T-cell (primary cell): ENCODE measurements at regions of chrX and their contacts with region 1.

Region 1: DNA sequence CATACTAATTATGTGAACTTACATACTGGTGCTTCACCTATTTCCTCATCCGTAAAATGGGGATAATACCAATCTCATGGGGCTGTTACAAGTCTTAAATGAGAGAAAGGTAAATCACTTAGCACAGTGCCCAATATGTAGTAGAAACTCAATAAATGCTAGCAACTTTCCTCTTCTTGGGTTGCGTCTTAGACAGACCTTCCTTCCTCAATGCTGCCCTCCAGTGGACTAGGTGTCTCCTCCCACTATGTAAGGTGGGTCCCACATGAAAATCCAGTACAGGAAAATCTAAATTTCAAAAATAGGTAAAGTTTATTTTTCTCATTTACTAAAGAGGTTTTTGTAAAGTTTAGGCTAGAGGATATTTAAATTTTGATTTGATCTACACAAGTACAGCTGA is 20.6 kb downstream of the ZDHHC9 start:
- DNase-seq: peak in 30 of 35 experiments; percentile 22 to 78 (median 48)
- ATAC-seq: peak; percentile 67 to 83 (median 80)
- H3K4me3 ChIP-seq: no peak overlapping the region
- H3K4me3 Mint-ChIP-seq: no peak overlapping the region
- H3K27ac ChIP-seq: no peak overlapping the region
- H3K27ac Mint-ChIP-seq: no peak overlapping the region
- H3K4me1 ChIP-seq: no peaks in the 10 kb centered on the region
- H3K4me1 Mint-ChIP-seq: peaks cover 13 to 17% (median 16%) of the 10 kb centered on the region in 3 donors
- H3K27me3 ChIP-seq: no peaks in the 10 kb centered on the region
- H3K27me3 Mint-ChIP-seq: no peaks in the 10 kb centered on the region

Region 2: DNA sequence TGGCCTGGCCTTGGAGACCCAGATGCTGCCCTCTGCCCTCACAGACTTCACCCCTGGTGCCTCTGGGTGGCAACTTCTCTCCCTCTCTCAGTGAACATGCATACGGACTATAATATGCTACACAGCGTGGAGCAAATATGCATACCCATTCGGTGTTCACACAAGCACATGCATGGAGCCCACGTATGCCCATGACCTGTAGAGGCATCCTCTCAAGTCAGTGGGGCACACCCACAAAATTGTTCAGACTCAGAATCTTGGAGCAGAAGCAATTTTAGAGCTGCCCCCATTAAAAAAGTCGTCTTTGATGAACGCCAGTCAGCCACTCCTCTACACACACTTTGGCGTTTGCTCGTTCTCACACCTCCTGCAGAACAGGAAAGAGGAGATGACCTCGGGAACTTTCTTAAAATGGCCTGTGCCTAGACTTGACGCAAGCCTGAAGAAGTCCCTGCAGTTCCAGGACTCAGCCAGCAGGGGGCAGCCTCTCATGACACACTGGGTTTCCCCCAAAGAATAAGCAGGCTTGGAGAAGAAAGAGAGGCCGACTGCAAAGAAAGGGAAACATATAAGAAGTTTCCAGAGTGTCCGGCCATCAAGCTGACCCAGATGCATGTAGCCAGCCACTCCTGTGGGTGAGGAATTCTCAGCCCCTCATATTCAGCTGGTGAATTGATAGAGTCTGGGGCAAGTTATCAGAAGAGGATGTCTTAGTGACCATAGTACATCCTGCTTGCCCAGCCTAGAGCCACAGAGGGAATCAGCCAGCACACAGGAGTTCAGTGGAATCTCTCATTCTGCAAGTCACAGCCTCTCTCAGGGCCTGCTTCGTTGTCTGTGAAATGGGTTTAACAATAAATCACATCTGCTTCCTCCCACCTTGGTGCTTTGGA is 185.7 kb before region 1 on chrX:
- CTCF ChIA-PET with region 1: interaction called, 6 to 10 read pairs
- POLR2A ChIA-PET with region 1: no interaction called
- DNase-seq: peak; percentile 30 to 80 (median 64)
- ATAC-seq: peak; percentile 68 to 75 (median 74)
- H3K4me3 ChIP-seq: no peak overlapping the region
- H3K4me3 Mint-ChIP-seq: no peak overlapping the region
- H3K27ac ChIP-seq: no peak overlapping the region
- H3K27ac Mint-ChIP-seq: no peak overlapping the region
- H3K4me1 ChIP-seq: peaks cover 0 to 6% of the 10 kb centered on the region in 2 experiments
- H3K4me1 Mint-ChIP-seq: peaks cover 4 to 11% (median 4%) of the 10 kb centered on the region in 3 donors
- H3K27me3 ChIP-seq: no peaks in the 10 kb centered on the region
- H3K27me3 Mint-ChIP-seq: peaks cover 3 to 13% of the 10 kb centered on the region in 2 donors

Region 3: DNA sequence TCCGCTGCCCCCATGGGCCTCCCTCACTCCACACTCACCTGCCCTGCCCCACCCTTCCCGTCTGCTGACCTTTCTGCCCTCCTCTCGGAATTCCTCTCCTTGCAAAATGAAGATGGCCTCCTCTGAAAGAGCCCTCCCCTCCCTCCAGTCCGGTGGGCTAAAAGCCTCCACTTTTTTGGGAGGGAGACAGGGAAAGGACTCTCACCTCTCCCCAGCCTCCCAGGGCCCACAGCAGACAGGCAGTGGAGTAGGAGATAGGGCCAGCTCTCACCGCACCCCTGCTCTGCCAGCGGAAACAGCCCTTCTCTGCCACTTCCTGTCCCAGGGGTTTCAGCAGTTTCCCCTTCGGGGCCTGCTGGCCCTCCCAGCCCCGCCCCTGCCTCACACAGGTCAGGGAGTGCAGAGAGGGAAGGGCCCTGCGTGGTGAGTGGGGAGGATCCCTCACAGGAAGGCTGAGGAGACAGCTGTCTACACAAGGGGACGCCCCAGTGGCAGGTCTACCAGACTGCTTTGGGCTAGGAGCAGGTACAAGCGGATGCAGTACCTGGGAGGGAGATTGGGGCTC is 268.9 kb after region 1 on chrX:
- CTCF ChIA-PET with region 1: no interaction called
- POLR2A ChIA-PET with region 1: no interaction called
- DNase-seq: peak; percentile 74 to 96 (median 89)
- ATAC-seq: peak; percentile 95 to 97 (median 96)
- H3K4me3 ChIP-seq: peak overlapping the region; percentile 33 to 49
- H3K4me3 Mint-ChIP-seq: peak overlapping the region; percentile 78 to 82 (median 81)
- H3K27ac ChIP-seq: peak overlapping the region; percentile 78
- H3K27ac Mint-ChIP-seq: peak overlapping the region; percentile 96 to 99
- H3K4me1 ChIP-seq: peaks cover 11 to 91% of the 10 kb centered on the region in 2 experiments
- H3K4me1 Mint-ChIP-seq: peaks cover 68 to 77% (median 76%) of the 10 kb centered on the region in 3 donors
- H3K27me3 ChIP-seq: no peaks in the 10 kb centered on the region
- H3K27me3 Mint-ChIP-seq: no peaks in the 10 kb centered on the region